A549 (cell line): ENCODE measurements at regions of chr7 and their contacts with region 1.

Region 1: GRCh38 chr7:151304856-151305255 is 36.8 kb upstream of the NUB1 start:
- DNase-seq: no peak
- ATAC-seq: no peak
- H3K4me3 ChIP-seq: no peak overlapping the region
- H3K27ac ChIP-seq: no peak overlapping the region
- H3K4me1 ChIP-seq: no peaks in the 10 kb centered on the region
- CTCF ChIP-seq: no peak
- EP300 ChIP-seq: no peak
- POLR2A ChIP-seq: no peak
- RAD21 ChIP-seq: no peak

Region 2: DNA sequence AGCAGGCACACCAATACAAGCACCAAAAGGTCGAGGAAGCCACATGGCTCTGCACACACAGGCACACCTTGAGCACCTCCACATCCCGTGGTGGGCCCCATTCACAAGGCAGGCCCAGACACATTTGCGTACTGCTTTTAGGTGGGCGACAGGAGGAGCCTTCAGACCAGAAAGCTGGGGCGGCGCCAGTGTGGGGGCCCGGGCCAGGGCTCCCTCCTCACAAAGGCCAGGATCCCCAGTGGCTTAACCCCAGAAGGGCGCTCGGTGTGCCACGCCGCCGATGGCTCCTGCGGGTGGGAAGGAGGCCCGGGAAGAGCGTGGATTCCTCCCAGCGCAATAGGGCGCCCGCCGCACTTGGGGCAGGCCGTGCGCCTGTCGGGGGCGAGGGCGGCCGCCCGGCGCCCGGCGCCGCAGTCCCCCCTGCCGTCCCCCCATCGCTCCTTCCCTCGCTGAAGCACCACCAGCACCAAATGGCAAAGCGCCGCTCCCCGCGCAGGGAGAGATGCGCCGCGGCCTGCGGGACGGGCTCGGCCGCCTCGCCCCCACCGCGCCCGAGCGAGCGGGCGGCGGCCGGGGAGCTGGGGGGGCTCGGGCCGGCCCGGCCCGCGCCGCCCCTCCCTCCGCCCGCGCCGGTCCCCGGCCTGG is 53.4 kb before region 1 on chr7:
- CTCF ChIA-PET with region 1: interaction called, 21 read pairs
- POLR2A ChIA-PET with region 1: no interaction called
- DNase-seq: peak; percentile 50 to 57
- ATAC-seq: peak; percentile 9 to 36
- H3K4me3 ChIP-seq: peak overlapping the region; percentile 51
- H3K27ac ChIP-seq: peak overlapping the region; percentile 87 to 94
- H3K4me1 ChIP-seq: peaks cover 39% of the 10 kb centered on the region
- CTCF ChIP-seq: no peak
- EP300 ChIP-seq: no peak
- POLR2A ChIP-seq: no peak
- RAD21 ChIP-seq: no peak